ENCODE measurements at regions of chr11 and their contacts with region 1.

Region 1: GRCh38 chr11:117232092-117232878 is at the start of gene RNF214:
- DNase-seq: peak; percentile 64 to 93 (median 81)
- H3K4me3 ChIP-seq: peak within 1 kb of the TSS; percentile 63 to 99 (median 92)
- H3K27ac ChIP-seq: peak within 1 kb of the TSS; percentile 60 to 99 (median 96)
- H3K27me3 ChIP-seq: no peaks in the 10 kb centered on the region
- CTCF ChIP-seq: peak; percentile 27 to 99 (median 86)
- total RNA-seq, gene RNF214: 29.4 to 57.9 (median 42.5) TPM

Region 2: DNA sequence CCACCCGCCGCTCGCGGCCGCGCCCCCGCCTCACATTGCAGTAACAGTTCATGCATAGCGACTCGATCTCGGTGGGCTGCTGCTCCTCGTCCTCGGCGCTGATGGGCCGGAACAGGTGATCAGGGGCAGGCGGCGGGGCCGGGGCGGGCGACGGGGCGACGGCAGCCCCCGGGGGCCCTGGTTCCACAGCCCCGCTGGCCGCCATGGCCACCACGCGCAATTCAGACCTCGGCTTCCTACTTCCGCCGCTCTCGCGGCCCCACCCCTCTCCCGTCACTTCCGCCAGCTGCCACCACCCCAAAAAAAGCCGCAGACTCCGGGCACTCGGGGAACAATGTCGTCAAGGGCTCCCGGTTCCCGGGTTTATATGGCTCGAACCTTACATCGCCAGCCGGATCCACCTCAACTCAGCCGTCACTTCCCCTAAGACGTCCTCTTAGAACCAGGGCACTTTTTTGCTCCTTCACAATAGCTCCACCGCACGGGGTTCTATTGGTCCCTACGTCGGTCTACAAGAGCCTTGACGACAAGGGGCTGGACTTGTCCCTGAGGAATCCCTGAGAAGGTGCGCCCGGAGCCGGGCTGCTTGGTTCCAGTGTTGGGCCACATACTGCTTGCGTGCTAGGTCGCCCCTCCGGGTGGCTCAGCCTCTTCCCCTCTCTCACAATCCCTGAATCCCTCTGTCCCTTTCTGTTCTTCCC is 444.3 kb before region 1 on chr11 and contains the start of gene ZPR1:
- intact Hi-C with region 1: loop called (anchors 2 to 5 kb)
- DNase-seq: peak; percentile 77 to 93 (median 88)
- H3K4me3 ChIP-seq: peak within 1 kb of the TSS; percentile 66 to 99 (median 95)
- H3K27ac ChIP-seq: peak within 1 kb of the TSS in 58 of 59 donors; percentile 6 to 92 (median 82)
- H3K27me3 ChIP-seq: no peaks in the 10 kb centered on the region
- CTCF ChIP-seq: peak in 28 of 56 donors; percentile 8 to 47 (median 28)
- total RNA-seq, gene ZPR1: 31.6 to 66.9 (median 46.6) TPM

Region 3: DNA sequence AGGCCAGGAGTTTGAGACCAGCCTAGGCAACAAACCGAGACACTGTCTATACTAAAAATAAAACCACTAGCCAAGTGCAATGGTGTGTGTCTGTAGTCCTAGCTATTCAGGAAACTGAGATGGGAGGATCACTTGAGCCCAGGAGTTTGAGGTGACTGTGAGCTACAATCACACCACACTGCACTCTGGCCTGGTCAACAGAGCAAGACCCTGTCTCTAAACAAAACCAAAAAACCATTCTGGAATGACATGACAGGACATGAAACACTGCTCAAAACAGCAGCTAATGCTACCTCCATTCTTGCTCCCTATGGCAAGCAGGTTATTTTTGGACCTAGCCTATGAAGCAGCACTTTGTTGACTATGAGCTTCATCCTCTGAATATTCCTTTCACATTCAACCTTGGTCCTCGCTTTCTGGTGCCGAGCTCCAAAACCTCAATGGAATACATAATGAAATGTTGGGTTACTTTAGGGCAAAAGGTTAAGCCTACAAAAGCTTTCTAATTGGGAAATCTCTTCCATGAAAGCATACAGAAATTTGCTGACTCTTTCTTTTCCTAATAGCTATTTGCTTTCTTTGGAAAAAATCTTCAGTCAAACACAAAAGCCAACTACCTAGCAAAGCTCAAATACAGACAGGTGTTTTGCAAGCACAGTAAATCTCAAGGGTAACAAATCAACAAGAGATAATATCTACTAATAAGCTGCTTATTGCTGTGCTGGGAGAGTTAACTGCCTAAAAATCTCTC is 155.2 kb before region 1 on chr11:
- intact Hi-C with region 1: no loop called
- DNase-seq: no peak
- H3K4me3 ChIP-seq: peak overlapping the region in 21 of 59 donors; percentile 0 to 45 (median 7)
- H3K27ac ChIP-seq: peak overlapping the region; percentile 53 to 100 (median 94)
- H3K27me3 ChIP-seq: no peaks in the 10 kb centered on the region
- CTCF ChIP-seq: no peak

Region 4: GRCh38 chr11:117143871-117144476 is 88.3 kb before region 1 on chr11 and contains the start of gene PAFAH1B2:
- intact Hi-C with region 1: loop called in 1 of 2 experiments (anchors 5 kb)
- DNase-seq: peak; percentile 90 to 97 (median 95)
- H3K4me3 ChIP-seq: peak within 1 kb of the TSS; percentile 68 to 99 (median 92)
- H3K27ac ChIP-seq: peak within 1 kb of the TSS; percentile 65 to 99 (median 95)
- H3K27me3 ChIP-seq: no peaks in the 10 kb centered on the region
- CTCF ChIP-seq: peak in 31 of 56 donors; percentile 6 to 59 (median 28)
- total RNA-seq, gene PAFAH1B2: 78.7 to 162 (median 121) TPM

Region 5: DNA sequence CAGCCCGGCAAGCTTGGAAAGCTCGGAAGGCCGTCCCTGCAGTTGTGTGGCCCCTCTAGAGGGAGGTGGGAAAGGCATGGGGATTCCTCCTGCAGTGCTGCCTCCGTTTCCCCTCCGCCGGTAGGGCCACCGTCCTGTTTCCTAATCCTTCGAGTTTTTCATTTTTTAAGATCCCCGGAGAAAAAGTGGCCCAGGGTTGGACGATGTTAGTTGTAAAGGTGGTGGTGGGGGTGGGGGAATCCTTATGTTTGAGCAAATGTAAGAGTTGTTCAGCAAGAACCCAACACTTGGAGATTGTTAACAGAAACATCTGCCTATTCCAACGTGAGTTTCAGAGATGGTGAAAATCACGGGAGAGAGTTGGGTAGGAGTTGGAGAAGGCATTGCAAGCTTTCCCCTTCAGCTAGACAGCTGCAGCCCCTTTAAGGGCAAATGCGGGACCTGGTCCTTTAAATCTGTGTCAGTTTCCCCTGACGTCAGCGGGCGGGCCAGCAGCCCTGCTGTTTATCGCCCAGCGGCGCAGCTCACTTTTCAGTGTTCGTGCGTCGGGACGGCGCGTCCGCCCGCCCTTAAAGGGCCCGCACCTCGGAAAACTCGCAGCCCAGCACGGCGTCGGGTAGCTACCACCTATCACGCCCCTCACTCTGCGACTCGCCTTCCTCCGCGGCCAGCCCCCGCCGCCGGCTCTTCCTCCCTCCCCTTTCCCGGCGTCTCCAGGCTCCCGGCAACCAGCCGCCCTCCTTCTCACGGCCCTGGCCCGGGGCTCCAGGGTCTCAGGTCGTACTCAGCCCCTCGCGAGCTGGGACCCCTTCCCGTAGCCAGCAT is 53.9 kb before region 1 on chr11 and contains the start of gene SIDT2:
- intact Hi-C with region 1: loop called (anchors 2 to 5 kb)
- DNase-seq: peak; percentile 91 to 97 (median 96)
- H3K4me3 ChIP-seq: peak within 1 kb of the TSS; percentile 69 to 100 (median 96)
- H3K27ac ChIP-seq: peak within 1 kb of the TSS; percentile 70 to 98 (median 92)
- H3K27me3 ChIP-seq: no peaks in the 10 kb centered on the region
- CTCF ChIP-seq: peak in 32 of 56 donors; percentile 3 to 57 (median 31)
- total RNA-seq, gene SIDT2: 44.3 to 113 (median 69.8) TPM

Region 6: DNA sequence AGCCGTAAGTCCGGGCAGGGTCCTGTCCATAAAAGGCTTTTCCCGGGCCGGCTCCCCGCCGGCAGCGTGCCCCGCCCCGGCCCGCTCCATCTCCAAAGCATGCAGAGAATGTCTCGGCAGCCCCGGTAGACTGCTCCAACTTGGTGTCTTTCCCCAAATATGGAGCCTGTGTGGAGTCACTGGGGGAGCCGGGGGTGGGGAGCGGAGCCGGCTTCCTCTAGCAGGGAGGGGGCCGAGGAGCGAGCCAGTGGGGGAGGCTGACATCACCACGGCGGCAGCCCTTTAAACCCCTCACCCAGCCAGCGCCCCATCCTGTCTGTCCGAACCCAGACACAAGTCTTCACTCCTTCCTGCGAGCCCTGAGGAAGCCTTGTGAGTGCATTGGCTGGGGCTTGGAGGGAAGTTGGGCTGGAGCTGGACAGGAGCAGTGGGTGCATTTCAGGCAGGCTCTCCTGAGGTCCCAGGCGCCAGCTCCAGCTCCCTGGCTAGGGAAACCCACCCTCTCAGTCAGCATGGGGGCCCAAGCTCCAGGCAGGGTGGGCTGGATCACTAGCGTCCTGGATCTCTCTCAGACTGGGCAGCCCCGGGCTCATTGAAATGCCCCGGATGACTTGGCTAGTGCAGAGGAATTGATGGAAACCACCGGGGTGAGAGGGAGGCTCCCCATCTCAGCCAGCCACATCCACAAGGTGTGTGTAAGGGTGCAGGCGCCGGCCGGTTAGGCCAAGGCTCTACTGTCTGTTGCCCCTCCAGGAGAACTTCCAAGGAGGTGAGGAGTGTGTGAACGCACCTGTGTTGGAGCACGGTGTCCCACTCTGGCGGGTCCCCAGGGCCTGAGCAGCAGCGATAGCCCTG is 33.0 kb before region 1 on chr11 and contains the start of gene TAGLN:
- intact Hi-C with region 1: no loop called
- DNase-seq: no peak
- H3K4me3 ChIP-seq: peak within 1 kb of the TSS in 35 of 59 donors; percentile 1 to 57 (median 32)
- H3K27ac ChIP-seq: peak within 1 kb of the TSS in 32 of 59 donors; percentile 10 to 85 (median 56)
- H3K27me3 ChIP-seq: no peaks in the 10 kb centered on the region
- CTCF ChIP-seq: no peak
- total RNA-seq, gene TAGLN: 19.4 to 1,046 (median 66.3) TPM

Region 7: DNA sequence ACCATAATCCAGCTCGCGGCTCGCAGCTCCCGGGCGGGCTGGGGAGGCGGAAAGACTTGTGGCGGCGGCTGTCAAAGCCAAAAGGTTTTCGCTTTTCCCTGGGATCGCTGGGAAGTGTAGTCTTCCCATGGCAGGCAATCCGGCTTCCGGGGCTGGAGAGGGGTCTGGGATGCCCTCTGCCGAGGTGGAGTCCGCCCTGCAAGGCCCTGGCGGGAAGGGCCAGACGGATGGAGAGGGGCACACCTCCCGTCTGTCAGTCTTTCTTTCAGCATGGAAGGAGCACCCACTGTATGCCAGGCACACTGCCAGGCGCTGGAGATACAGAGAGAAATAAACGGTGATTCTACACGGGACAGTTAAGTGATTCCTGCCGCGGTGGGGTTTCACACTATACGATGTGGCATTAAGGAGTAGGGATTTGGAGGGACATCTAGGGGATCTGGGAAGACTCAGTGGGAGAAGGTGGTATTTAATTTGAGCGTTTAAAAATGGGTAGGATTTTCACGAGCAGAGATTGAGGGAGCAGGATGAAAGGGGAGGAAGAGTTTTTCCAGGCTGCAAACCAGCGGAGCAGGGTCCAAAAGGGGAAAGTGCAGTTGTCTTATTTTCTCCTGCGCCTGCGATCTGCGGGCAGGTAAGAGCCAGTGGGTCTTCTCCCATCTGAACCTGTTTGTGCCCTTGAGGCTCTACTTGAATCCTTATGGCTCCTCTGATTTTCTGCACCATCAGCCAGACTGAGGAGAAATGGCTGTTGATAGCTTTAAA is 84.1 kb after region 1 on chr11 and contains the start of gene BACE1:
- intact Hi-C with region 1: loop called (anchors 1 kb)
- DNase-seq: peak; percentile 74 to 95 (median 92)
- H3K4me3 ChIP-seq: peak within 1 kb of the TSS; percentile 66 to 96 (median 87)
- H3K27ac ChIP-seq: peak within 1 kb of the TSS in 56 of 59 donors; percentile 7 to 89 (median 70)
- H3K27me3 ChIP-seq: no peaks in the 10 kb centered on the region
- CTCF ChIP-seq: peak in 55 of 56 donors; percentile 42 to 85 (median 66)
- total RNA-seq, gene BACE1: 61.2 to 214 (median 97.2) TPM

Region 8: DNA sequence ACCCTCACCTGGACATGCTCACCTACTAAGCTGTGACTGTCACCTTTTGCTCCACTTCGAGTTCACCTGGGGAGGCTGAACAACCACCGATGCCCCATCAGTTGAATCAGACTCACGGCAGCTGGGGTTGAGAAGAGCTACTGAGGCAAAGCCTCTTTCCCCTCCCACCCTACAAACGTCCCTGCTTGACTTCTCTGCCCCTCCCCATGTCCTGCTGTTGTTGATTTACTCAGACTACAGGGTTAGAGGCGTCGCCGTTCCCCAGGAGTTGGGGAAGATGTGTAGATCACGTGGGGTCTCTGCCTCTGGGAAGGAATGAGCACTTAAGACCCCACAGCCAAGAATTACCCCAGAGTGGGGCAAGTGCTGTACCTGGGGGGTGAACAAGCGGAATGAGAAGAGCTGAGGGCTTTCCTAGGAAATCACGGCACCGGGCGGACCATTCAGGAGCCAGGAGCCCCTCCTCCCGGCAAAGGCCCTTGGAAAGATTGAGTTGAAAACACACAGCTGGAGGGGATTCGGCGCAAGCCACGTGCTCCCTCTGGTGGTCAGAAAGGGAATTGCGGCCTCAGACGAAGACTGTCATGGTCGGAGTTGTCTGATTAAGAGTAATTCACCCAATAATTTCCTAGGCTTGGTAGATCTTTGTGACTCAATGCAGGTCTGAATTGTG is 585.2 kb after region 1 on chr11:
- intact Hi-C with region 1: loop called (anchors 10 kb)
- DNase-seq: peak; percentile 74 to 94 (median 90)
- H3K4me3 ChIP-seq: peak overlapping the region in 23 of 59 donors; percentile 1 to 51 (median 25)
- H3K27ac ChIP-seq: peak overlapping the region in 1 of 59 donors; percentile 75
- H3K27me3 ChIP-seq: peaks cover 0 to 5% (median 0%) of the 10 kb centered on the region in 45 donors
- CTCF ChIP-seq: peak; percentile 98 to 100 (median 100)

Measured in dorsolateral prefrontal cortex (tissue), 120 donors.